Testis (tissue), 5 donors: ENCODE measurements at regions of chr10 and their contacts with region 1.

Region 1: DNA sequence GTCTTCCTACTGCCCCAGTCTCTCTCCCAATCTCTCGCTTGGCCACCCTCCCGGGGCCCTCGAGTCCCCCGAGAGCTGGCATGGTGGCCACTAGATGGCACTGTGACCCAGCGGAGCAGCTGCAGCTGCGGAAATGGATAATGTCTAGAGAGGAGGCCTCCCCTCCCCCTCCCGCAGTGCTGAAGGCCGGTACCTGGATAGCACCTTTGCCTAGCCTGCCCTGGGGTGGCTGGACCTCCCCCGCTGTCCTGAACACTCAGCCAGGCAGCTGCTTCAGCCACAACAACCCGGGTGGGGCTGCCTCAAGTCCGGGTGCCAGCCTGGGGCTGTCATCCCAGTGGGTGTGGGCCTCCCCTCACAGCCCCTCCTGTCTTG is 65.2 kb downstream of the GOLGA7B start:
- DNase-seq: peak; percentile 82
- H3K4me3 ChIP-seq: no peak overlapping the region
- H3K27ac ChIP-seq: no peak overlapping the region
- H3K4me1 ChIP-seq: peaks cover 11% of the 10 kb centered on the region
- H3K27me3 ChIP-seq: no peaks in the 10 kb centered on the region
- CTCF ChIP-seq: peak; percentile 39 to 82 (median 53)
- POLR2A ChIP-seq: no peak

Region 2: DNA sequence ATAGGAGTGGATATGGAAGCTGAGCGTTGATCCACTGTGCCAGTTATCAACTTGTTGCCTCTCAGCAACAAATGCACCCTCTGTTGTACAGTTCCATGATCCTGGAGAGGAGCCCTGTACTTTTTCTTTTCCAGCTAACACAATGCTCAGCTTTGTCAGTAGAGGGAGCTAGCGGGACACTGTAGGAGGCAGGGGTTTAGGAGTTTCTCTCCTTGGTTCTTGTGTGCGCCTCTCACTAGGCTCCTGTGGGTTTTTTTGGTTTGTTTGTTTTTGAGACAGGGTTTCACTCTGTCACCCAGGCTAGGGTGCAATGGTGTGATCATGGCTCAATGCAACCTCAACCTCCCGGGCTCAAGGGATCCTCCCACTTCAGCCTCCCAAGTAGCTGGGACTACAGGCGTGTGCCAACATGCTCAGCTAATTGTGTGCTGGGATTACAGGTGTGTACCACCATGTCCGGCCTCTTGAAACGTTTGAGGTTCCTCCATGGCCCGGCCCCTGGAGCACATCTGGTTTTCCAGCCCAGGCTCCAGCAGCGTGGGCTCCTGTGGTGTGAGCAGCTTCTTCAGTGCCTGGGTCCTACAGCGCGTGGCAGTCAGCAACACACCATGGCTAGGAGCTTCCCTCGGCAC is 213.3 kb before region 1 on chr10:
- intact Hi-C with region 1: no loop called
- DNase-seq: peak; percentile 70
- H3K4me3 ChIP-seq: no peak overlapping the region
- H3K27ac ChIP-seq: no peak overlapping the region
- H3K4me1 ChIP-seq: no peaks in the 10 kb centered on the region
- H3K27me3 ChIP-seq: no peaks in the 10 kb centered on the region
- CTCF ChIP-seq: peak; percentile 59 to 75 (median 65)
- POLR2A ChIP-seq: no peak

Region 3: GRCh38 chr10:98045785-98046389 is 131.1 kb after region 1 on chr10:
- intact Hi-C with region 1: loop called (anchors 10 kb)
- DNase-seq: peak; percentile 78
- H3K4me3 ChIP-seq: no peak overlapping the region
- H3K27ac ChIP-seq: no peak overlapping the region
- H3K4me1 ChIP-seq: no peaks in the 10 kb centered on the region
- H3K27me3 ChIP-seq: no peaks in the 10 kb centered on the region
- CTCF ChIP-seq: peak; percentile 63 to 90 (median 65)
- POLR2A ChIP-seq: no peak